ENCODE measurements at regions of chr7 and their contacts with region 1.

Region 1: DNA sequence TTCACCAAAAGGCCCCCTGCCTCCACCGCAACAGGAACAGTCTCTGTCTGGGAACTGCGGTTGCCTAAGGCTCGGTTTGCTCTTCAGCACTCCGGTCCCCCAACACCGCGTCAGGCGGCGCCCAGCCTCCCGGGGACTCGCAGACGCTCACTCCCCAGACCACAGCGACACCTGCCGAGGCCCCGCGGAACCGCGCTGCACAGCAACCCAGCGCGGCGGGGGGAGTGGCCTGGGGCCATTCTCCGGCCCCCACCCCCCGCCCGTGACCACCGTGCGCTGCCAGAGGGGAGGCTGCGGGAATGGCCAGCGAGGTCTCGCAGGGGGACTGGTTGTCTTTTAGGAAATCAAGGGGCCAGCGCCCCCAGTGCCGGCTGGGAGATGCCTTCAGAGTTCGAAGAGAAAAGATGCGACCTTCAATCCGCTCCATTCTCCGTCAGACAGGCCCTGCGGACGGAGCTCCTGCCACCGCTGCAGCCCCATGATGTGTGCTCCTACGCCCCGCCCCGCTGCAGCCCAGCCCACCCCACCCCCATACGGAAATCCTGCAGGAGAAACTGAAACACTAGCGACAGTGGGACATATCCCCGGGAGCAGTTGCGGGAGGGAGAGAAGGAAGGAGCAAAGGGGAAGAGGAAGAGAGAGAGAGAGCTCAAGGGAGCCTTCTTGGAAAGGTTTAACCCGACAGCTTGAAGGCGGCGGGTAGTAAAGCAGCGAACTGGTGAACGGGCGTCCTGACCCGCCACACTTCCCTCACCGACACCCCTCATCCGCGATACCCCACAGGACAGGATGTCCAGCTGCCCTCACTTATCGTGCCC is 137.4 kb upstream of the CDCA7L start:
- DNase-seq: peak; percentile 87
- H3K4me3 ChIP-seq: peak overlapping the region; percentile 61
- H3K27ac ChIP-seq: no peak overlapping the region
- H3K4me1 ChIP-seq: peaks cover 5% of the 10 kb centered on the region
- H3K27me3 ChIP-seq: peaks cover 18% of the 10 kb centered on the region
- CTCF ChIP-seq: peak; percentile 99

Region 2: DNA sequence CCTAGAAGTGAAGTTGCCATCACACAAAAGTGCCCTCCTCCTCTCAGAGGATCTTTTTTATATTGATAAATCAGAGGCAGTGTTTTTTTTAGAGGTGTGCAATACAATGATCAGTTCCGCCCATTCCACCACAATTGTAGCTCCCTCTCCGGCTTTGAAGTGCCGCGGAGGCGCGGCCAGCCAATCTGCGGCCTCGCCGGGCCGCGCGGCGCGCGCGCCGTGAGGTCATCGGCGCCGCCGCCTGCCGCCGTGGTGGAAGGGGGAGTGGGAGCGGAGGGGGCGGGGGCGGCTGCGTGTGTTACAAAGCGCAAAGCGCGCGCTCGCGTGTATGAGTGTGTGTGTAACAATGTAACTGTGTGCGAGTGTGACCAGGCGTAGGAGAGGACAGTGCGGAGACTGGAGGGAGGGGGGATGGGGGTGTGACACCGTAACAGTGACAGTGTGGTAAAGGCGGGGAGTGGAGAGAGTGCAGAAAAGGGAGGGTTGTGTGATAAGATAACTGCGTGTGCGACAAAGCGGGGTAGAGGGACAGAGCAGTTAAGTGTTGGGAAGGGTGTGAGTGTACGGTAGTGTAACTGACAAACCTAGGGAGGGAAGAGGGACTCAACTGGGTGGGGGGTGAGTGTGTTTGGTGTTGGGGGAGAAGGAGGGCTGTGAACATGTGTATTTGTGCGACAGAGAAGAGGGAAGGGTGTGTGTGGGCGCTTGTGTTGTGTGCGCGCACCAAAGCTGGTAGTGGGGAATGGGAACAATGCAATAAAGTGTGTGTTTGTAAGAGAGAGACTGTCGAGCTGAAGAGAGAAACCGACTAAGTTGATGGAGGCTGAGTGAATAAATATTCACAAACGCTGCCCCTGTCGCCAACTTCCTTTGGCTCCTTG is 1296.1 kb before region 1 on chr7 and contains the start of gene SP8:
- CTCF ChIA-PET with region 1: no interaction called
- POLR2A ChIA-PET with region 1: no interaction called
- intact Hi-C with region 1: loop called (anchors 10 kb)
- DNase-seq: peak; percentile 58
- H3K4me3 ChIP-seq: peak within 1 kb of the TSS; percentile 37
- H3K27ac ChIP-seq: no peak within 1 kb of the TSS
- H3K4me1 ChIP-seq: peaks cover 5% of the 10 kb centered on the region
- H3K27me3 ChIP-seq: peaks cover 100% of the 10 kb centered on the region
- CTCF ChIP-seq: no peak
- total RNA-seq, gene SP8: not detected in 2 replicates

Region 3: DNA sequence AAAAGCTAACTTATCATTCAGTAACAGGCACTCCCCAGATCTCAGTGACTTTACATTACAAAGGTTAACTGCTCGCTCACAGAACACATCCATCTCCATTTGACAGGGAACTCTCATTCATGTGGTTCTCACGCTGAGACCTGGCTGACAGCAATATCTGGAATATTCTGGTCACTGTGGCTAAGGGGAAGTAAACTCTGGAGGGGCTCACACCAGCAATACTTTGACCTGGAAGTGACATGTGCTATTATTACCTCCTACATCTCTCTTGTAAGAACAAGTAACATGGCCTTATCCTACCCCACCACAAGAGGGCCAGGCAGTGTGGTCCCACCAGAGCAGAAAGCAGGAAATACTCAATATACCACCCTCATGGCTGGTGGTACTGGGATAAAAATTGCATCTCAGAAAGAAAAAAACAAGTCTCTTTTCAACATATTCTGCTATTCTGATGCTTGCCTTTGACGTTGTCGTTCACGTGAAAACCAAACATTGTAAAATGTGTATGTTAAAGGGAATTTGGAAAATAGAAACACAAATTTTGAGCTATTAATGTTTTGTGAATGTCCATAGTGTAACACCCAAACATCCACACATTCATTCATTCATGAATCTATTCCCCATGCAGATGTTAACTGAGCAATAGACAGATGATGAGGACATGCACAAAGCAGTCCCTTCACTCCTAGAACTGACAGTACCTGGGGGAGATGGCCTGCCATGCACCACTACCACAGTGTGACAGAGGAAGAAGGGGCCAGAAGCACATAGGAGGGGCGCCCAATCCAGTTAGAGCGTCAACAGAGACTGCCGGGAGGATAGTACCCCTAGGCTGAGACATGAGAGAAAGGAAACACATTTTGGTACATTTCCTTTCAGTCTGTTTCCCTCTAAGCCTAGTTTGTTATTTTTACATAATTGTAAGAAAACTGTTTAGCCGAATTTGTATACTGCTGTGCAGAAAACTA is 821.2 kb before region 1 on chr7:
- CTCF ChIA-PET with region 1: no interaction called
- POLR2A ChIA-PET with region 1: no interaction called
- intact Hi-C with region 1: loop called (anchors 5 kb)
- DNase-seq: peak; percentile 58
- H3K4me3 ChIP-seq: no peak overlapping the region
- H3K27ac ChIP-seq: no peak overlapping the region
- H3K4me1 ChIP-seq: no peaks in the 10 kb centered on the region
- H3K27me3 ChIP-seq: peaks cover 56% of the 10 kb centered on the region
- CTCF ChIP-seq: peak; percentile 66

Region 4: DNA sequence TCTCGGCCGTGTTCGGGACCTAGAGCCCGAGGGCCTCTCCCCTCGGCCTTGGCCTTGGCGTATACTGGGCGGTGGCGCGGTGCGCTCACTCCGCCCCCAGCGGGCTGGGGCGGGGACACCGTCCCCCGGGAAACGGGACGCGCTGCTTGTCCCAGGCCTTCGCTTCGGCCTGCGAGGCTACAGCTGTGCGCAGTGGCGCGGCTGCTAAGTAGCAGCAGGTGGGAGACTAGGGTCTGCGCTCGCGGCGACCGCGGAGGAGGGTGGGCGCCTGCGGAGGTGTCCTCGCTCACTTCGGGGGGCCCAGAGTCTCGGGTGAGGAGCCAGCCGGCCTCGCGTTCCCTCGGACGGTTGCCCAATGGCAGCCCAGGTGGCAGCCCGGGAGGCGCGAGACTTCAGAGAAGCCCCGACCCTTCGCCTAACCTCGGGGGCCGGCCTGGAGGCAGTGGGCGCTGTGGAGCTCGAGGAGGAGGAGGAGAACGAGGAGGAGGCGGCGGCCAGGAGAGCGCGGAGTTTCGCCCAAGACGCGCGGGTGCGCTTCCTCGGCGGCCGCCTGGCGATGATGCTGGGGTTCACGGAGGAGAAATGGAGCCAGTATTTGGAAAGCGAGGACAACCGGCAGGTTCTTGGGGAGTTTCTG is 540.1 kb before region 1 on chr7 and contains the start of gene DNAH11:
- CTCF ChIA-PET with region 1: no interaction called
- POLR2A ChIA-PET with region 1: no interaction called
- intact Hi-C with region 1: loop called (anchors 10 kb)
- DNase-seq: peak; percentile 15
- H3K4me3 ChIP-seq: peak within 1 kb of the TSS; percentile 14
- H3K27ac ChIP-seq: no peak within 1 kb of the TSS
- H3K4me1 ChIP-seq: no peaks in the 10 kb centered on the region
- H3K27me3 ChIP-seq: peaks cover 100% of the 10 kb centered on the region
- CTCF ChIP-seq: no peak
- total RNA-seq, gene DNAH11: 0.15 and 0.54 TPM in 2 replicates

Region 5: GRCh38 chr7:21767300-21767900 is 315.7 kb before region 1 on chr7:
- CTCF ChIA-PET with region 1: no interaction called
- POLR2A ChIA-PET with region 1: no interaction called
- intact Hi-C with region 1: loop called (anchors 5 kb)
- DNase-seq: peak; percentile 77
- H3K4me3 ChIP-seq: no peak overlapping the region
- H3K27ac ChIP-seq: no peak overlapping the region
- H3K4me1 ChIP-seq: peaks cover 8% of the 10 kb centered on the region
- H3K27me3 ChIP-seq: peaks cover 95% of the 10 kb centered on the region
- CTCF ChIP-seq: peak; percentile 71

Region 6: GRCh38 chr7:22301790-22302189 is 218.7 kb after region 1 on chr7:
- CTCF ChIA-PET with region 1: no interaction called
- POLR2A ChIA-PET with region 1: interaction called, 10 read pairs
- intact Hi-C with region 1: no loop called
- DNase-seq: no peak
- H3K4me3 ChIP-seq: no peak overlapping the region
- H3K27ac ChIP-seq: peak overlapping the region; percentile 76
- H3K4me1 ChIP-seq: peaks cover 15% of the 10 kb centered on the region
- H3K27me3 ChIP-seq: no peaks in the 10 kb centered on the region
- CTCF ChIP-seq: no peak